MCF 10A (cell line): ENCODE measurements at regions of chr3 and their contacts with region 1.

Region 1: GRCh38 chr3:105686278-105686897 is 182.4 kb downstream of the CBLB start:
- DNase-seq: peak; percentile 23
- H3K4me3 Mint-ChIP-seq: no peak overlapping the region
- H3K27ac Mint-ChIP-seq: peak overlapping the region; percentile 27
- H3K4me1 Mint-ChIP-seq: peaks cover under 1% of the 10 kb centered on the region
- H3K27me3 Mint-ChIP-seq: no peaks in the 10 kb centered on the region
- CTCF ChIP-seq: peak; percentile 73

Region 2: DNA sequence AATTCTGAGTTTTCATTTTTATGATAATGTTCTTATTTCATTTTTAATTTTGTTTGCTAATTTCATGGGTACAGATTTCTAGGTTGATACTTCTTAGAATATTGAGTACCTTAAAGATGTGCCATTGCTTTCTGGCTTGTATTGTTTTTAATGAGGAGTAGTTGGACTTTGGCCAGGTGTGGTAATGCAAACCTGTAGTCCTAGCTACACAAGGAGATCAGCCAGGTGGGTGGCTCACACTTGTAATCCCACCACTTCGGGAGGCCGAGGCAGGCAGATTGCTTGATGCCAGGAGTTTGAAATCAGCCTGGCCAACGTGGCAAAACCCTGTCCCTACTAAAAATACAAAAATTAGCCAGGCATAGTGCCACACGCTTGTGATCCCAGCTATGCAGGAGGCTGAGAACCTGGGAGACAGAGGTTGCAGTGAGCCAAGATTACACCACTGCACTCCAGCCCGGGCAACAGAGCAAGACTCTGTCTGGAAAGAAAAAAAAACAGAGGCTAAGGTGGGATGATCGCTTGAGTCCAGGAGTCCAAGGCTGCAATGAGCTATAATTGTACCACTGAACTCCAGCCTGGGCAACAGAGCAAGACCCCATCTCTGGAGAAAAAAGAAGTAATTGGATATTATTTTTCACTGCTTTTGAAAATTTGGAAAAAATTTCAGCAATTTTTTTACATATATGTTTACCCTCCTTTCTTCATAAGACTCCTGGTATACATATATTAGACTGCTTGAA is 121.7 kb before region 1 on chr3:
- CTCF ChIA-PET with region 1: no interaction called
- POLR2A ChIA-PET with region 1: no interaction called
- intact Hi-C with region 1: no loop called
- DNase-seq: no peak
- H3K4me3 Mint-ChIP-seq: no peak overlapping the region
- H3K27ac Mint-ChIP-seq: no peak overlapping the region
- H3K4me1 Mint-ChIP-seq: peaks cover 5% of the 10 kb centered on the region
- H3K27me3 Mint-ChIP-seq: no peaks in the 10 kb centered on the region
- CTCF ChIP-seq: no peak

Region 3: GRCh38 chr3:106119614-106120082 is 433.3 kb after region 1 on chr3:
- CTCF ChIA-PET with region 1: interaction called, 3 read pairs
- POLR2A ChIA-PET with region 1: no interaction called
- intact Hi-C with region 1: loop called (anchors 5 kb)
- DNase-seq: no peak
- H3K4me3 Mint-ChIP-seq: no peak overlapping the region
- H3K27ac Mint-ChIP-seq: no peak overlapping the region
- H3K4me1 Mint-ChIP-seq: peaks cover 7% of the 10 kb centered on the region
- H3K27me3 Mint-ChIP-seq: no peaks in the 10 kb centered on the region
- CTCF ChIP-seq: no peak

Region 4: DNA sequence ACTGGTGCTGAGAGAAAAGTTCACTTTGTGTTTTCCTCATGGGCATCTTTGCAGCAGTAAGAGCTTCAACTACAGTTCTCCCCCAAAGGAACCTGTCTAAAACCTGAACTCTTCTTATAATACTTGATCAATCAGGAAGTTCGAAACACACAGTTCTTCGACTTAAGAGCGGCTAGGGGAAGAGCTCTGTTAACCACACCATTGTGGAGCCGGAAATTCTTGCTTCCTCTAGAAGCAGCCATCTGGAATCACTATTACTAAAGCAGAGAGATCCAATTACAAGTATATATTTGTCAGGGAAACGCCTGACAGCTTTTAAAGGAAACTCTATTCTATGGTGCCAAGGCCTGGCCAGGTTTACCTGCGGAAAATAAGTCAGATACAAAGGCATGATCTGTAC is 519.8 kb after region 1 on chr3:
- CTCF ChIA-PET with region 1: interaction called, 6 read pairs
- POLR2A ChIA-PET with region 1: no interaction called
- intact Hi-C with region 1: loop called (anchors 2 kb)
- DNase-seq: no peak
- H3K4me3 Mint-ChIP-seq: no peak overlapping the region
- H3K27ac Mint-ChIP-seq: no peak overlapping the region
- H3K4me1 Mint-ChIP-seq: no peaks in the 10 kb centered on the region
- H3K27me3 Mint-ChIP-seq: no peaks in the 10 kb centered on the region
- CTCF ChIP-seq: no peak

Region 5: GRCh38 chr3:106345353-106346027 is 659.1 kb after region 1 on chr3:
- CTCF ChIA-PET with region 1: no interaction called
- POLR2A ChIA-PET with region 1: no interaction called
- intact Hi-C with region 1: loop called (anchors 10 kb)
- DNase-seq: peak; percentile 92
- H3K4me3 Mint-ChIP-seq: peak overlapping the region; percentile 19
- H3K27ac Mint-ChIP-seq: peak overlapping the region; percentile 93
- H3K4me1 Mint-ChIP-seq: peaks cover 23% of the 10 kb centered on the region
- H3K27me3 Mint-ChIP-seq: no peaks in the 10 kb centered on the region
- CTCF ChIP-seq: no peak